ENCODE measurements at regions of chr5 and their contacts with region 1.

Region 1: DNA sequence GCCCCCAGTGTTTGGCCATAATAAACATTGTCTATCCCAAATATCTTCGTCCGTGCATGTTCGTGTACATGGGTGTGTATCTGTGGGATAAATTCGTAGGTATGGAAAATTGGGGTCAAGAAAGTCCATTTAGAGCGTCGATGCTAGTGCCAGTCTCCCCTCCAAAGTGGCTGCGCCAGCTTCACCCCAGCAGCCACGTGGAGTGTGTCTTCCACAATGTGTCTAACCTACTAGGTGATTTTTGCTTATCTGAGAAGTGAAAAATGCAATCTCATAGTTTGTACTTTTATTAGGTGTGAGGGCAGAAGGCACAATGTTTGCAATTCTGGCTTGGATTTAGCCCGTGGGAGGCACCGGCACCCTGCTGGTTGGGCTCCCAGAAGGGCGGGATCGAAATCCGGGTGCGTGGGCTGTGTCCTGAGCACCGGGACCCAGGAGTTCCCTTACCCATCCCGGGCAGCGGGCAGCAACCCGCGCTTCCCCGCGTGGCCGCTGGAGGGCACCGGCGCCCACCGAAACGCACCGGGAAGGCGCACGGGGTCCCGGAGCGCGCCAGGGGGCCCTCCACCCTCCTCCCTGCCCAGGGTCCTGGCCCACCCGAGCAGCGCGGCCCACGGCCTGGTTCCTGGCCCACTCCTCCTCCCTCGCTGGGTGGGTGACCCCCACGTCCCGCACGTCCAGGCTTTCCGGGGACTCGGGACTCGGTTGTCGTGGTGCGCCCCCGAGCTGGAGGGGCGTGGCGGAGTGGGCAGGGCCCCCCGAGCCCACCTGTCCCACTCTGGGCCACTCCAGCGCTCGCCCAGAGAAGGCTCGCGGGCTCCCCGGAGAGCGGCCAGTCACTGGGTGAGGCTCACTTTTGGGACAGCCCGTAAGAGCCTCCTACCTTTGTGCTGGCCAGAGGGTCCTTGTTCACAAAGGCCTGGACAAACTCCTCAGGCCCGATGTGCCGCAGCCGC is 55.4 kb upstream of the RNF130 start:
- DNase-seq: peak in 1 of 5 donors; percentile 64
- ATAC-seq: peak in 2 of 4 donors; percentile 55 to 69
- H3K4me3 ChIP-seq: no peak overlapping the region
- H3K27ac ChIP-seq: no peak overlapping the region
- H3K4me1 ChIP-seq: peaks cover 0 to 6% (median 0%) of the 10 kb centered on the region in 12 donors
- H3K27me3 ChIP-seq: peaks cover 0 to 34% (median 13%) of the 10 kb centered on the region in 9 donors
- CTCF ChIP-seq: peak; percentile 59 to 87 (median 75)
- POLR2A ChIP-seq: no peak

Region 2: GRCh38 chr5:179870402-179870903 is 256.6 kb before region 1 on chr5:
- intact Hi-C with region 1: no loop called
- DNase-seq: peak in 4 of 5 donors; percentile 34 to 89 (median 76)
- ATAC-seq: peak; percentile 27 to 80 (median 67)
- H3K4me3 ChIP-seq: no peak overlapping the region
- H3K27ac ChIP-seq: peak overlapping the region in 6 of 12 donors; percentile 18 to 74 (median 39)
- H3K4me1 ChIP-seq: peaks cover 0 to 15% (median 1%) of the 10 kb centered on the region in 12 donors
- H3K27me3 ChIP-seq: no peaks in the 10 kb centered on the region
- CTCF ChIP-seq: peak in 9 of 12 donors; percentile 13 to 69 (median 46)
- POLR2A ChIP-seq: no peak

Region 3: GRCh38 chr5:180209137-180209581 is 82.2 kb after region 1 on chr5 and contains the start of gene RASGEF1C:
- intact Hi-C with region 1: loop called in 9 of 10 experiments (anchors 2 to 10 kb)
- DNase-seq: peak in 4 of 5 donors; percentile 50 to 82 (median 59)
- ATAC-seq: peak; percentile 35 to 94 (median 66)
- H3K4me3 ChIP-seq: peak within 1 kb of the TSS in 10 of 12 donors; percentile 16 to 48 (median 40)
- H3K27ac ChIP-seq: peak within 1 kb of the TSS in 1 of 12 donors; percentile 36
- H3K4me1 ChIP-seq: peaks cover 0 to 10% (median 2%) of the 10 kb centered on the region in 12 donors
- H3K27me3 ChIP-seq: peaks cover 5 to 53% (median 24%) of the 10 kb centered on the region in 9 donors
- CTCF ChIP-seq: peak in 8 of 12 donors; percentile 15 to 59 (median 27)
- POLR2A ChIP-seq: no peak
- total RNA-seq, gene RASGEF1C: 0.16 to 0.75 (median 0.23) TPM in 5 of 9 donors, not detected in the others

Region 4: DNA sequence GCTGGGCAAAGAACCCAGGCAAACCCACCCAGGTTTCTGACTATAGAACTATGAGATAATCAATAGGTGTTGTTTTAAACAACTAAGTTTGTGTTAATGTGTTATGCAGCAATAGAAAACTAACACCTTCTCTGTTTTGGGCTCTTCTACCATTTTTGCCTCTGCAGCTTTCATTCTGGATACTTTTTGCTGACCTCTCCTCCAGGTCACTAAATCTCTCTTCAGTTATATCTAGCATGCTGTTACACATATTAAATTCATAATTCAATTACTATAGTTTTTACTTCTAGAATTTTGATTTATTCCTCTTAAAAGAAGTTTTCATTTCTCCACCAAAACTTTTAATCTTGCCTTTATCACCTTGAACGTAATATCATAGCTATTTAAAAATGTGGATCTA is 147.7 kb after region 1 on chr5:
- intact Hi-C with region 1: no loop called
- DNase-seq: no peak
- ATAC-seq: no peak
- H3K4me3 ChIP-seq: no peak overlapping the region
- H3K27ac ChIP-seq: no peak overlapping the region
- H3K4me1 ChIP-seq: no peaks in the 10 kb centered on the region
- H3K27me3 ChIP-seq: no peaks in the 10 kb centered on the region
- CTCF ChIP-seq: no peak
- POLR2A ChIP-seq: no peak

Region 5: GRCh38 chr5:180328296-180329137 is 201.5 kb after region 1 on chr5:
- intact Hi-C with region 1: loop called in 4 of 10 experiments (anchors 5 to 10 kb)
- DNase-seq: peak; percentile 67 to 90 (median 77)
- ATAC-seq: peak in 3 of 4 donors; percentile 19 to 53 (median 46)
- H3K4me3 ChIP-seq: no peak overlapping the region
- H3K27ac ChIP-seq: no peak overlapping the region
- H3K4me1 ChIP-seq: peaks cover 0 to 8% (median 0%) of the 10 kb centered on the region in 12 donors
- H3K27me3 ChIP-seq: peaks cover 0 to 8% (median 0%) of the 10 kb centered on the region in 9 donors
- CTCF ChIP-seq: peak; percentile 48 to 81 (median 71)
- POLR2A ChIP-seq: no peak

Region 6: GRCh38 chr5:180470966-180471582 is 344.1 kb after region 1 on chr5:
- intact Hi-C with region 1: loop called in 8 of 10 experiments (anchors 5 to 10 kb)
- DNase-seq: peak in 3 of 5 donors; percentile 46 to 58 (median 48)
- ATAC-seq: peak; percentile 52 to 81 (median 78)
- H3K4me3 ChIP-seq: no peak overlapping the region
- H3K27ac ChIP-seq: no peak overlapping the region
- H3K4me1 ChIP-seq: peaks cover 0 to 12% (median 0%) of the 10 kb centered on the region in 12 donors
- H3K27me3 ChIP-seq: peaks cover 0 to 5% (median 0%) of the 10 kb centered on the region in 9 donors
- CTCF ChIP-seq: peak; percentile 82 to 95 (median 93)
- POLR2A ChIP-seq: no peak

Region 7: DNA sequence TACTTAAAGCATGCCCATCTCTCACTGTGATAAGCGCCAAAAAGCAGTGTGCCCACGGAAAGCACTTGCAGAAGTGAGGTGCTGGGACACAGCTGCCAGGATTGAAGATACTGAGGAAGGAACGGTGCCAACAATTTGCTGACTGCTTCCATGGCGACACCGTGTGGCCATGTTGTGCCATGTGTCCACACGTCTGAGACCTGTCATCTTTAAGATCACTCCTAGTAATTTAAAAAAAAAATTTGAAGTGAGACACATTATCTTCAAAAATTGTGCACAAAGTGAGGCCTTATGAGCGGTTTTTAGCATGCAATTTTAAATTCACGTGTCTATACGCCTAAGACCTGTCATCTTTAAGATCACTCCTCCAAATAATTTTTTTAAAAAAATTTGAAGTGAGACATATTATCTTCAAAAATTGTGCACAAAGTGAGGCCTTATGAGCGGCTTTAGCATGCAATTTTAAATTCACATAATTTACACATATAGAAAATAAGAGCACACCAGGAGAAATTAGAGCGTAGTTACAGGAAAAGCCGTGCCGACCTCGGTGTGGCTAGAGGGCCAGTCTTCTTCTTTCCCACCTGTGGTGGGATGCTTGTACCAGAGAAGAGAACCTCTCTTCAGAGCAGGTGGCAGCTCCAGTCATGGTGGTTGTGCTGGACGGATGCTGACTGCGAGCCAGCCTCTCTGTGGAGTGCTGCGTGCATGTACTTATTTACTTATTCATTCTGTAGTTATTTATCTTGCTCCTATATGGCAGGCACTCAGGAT is 543.8 kb after region 1 on chr5:
- intact Hi-C with region 1: loop called in 1 of 10 experiments (anchors 5 kb)
- DNase-seq: peak in 4 of 5 donors; percentile 32 to 58 (median 50)
- ATAC-seq: peak in 3 of 4 donors; percentile 63 to 75 (median 74)
- H3K4me3 ChIP-seq: no peak overlapping the region
- H3K27ac ChIP-seq: no peak overlapping the region
- H3K4me1 ChIP-seq: peaks cover 0 to 9% (median 0%) of the 10 kb centered on the region in 12 donors
- H3K27me3 ChIP-seq: peaks cover 9 to 29% (median 21%) of the 10 kb centered on the region in 9 donors
- CTCF ChIP-seq: peak; percentile 55 to 80 (median 67)
- POLR2A ChIP-seq: no peak